A673 (cell line): ENCODE measurements at regions of chr6 and their contacts with region 1.

Region 1: DNA sequence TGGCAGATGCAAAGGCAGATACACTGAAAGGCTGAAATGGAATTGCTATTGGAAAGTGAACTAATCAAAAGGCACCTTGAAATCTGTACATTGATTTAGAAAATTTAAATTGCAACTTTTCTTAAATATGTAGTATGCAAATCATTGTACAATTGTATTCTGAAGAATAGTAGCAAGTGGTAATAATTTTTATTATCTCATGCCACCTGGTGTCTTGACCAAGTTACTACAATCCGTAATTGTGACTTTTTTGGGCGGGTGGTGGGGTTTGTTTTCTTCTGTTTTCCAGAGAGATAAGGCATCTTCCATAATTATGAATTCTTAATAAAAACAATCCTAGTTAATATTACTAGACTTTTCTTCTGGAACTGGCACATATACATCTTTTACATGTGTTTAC is 12.5 kb upstream of the BCKDHB start:
- DNase-seq: peak; percentile 41
- H3K4me3 ChIP-seq: no peak overlapping the region
- H3K27ac ChIP-seq: no peak overlapping the region
- H3K4me1 ChIP-seq: no peaks in the 10 kb centered on the region
- H3K27me3 ChIP-seq: no peaks in the 10 kb centered on the region
- CTCF ChIP-seq: peak; percentile 65

Region 2: DNA sequence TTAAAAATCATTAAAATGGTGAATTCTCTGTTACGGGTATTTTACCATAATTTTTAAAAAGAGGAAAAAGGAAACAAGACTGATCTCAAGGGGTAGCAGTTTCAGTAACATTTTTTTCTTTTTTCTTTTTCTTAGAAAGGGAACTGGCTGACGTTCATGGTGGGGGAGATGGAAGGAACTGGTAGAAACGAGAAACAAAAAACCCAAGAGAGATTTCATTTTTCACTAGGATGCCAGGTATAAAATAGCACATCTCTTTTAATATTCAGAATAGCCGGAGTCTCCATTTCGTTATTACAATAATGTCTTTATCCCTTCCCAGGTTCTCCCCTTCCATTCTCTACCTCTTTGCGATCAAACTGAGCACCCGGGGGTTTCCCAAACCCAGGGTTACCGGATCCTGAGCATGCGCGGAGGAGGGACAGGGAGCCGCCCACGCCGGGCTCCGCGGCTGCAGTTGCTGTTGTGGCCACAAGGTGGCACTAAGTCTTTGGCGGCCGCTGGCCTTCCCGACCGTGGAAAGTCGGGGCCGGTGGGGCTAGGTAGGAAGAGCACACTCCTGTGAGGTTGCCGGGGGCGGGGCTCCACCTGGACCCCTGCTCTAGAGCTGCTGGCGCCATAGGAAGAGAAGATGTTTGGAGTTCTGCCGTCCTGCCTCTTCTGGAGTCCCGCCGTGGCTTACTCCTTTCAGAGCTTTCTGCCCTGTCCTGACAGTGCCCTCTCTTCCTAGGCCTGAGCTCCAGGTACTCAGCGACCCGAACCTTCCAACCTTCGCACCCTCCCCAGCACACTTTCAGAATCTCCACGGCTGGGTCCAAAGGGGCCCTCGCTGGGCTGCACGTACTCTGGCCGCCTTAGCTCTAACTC is 316.1 kb before region 1 on chr6:
- CTCF ChIA-PET with region 1: no interaction called
- POLR2A ChIA-PET with region 1: no interaction called
- intact Hi-C with region 1: loop called (anchors 5 kb)
- DNase-seq: peak; percentile 81
- H3K4me3 ChIP-seq: peak overlapping the region; percentile 22
- H3K27ac ChIP-seq: no peak overlapping the region
- H3K4me1 ChIP-seq: no peaks in the 10 kb centered on the region
- H3K27me3 ChIP-seq: no peaks in the 10 kb centered on the region
- CTCF ChIP-seq: peak; percentile 99

Region 3: GRCh38 chr6:79878142-79878753 is 215.8 kb before region 1 on chr6:
- CTCF ChIA-PET with region 1: no interaction called
- POLR2A ChIA-PET with region 1: no interaction called
- intact Hi-C with region 1: loop called (anchors 5 kb)
- DNase-seq: no peak
- H3K4me3 ChIP-seq: no peak overlapping the region
- H3K27ac ChIP-seq: no peak overlapping the region
- H3K4me1 ChIP-seq: no peaks in the 10 kb centered on the region
- H3K27me3 ChIP-seq: no peaks in the 10 kb centered on the region
- CTCF ChIP-seq: no peak

Region 4: DNA sequence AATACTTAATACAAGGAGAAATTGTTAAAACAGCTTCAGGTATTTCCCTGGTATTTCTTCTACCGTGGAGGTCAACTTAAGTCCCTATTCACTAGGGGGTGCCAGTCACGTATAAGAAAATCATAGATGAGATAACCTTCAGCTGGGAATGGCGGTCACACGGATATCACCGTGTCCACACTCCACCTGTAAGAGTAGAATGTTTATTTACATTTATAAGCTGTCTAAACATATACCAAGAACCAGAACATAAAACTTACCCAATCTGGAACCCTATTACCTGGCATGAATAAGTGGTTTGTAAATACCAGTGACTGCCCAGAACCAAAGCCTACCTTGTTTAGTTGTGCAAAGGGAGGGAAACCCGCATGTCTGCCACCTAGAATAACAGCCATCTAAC is 144.8 kb before region 1 on chr6:
- CTCF ChIA-PET with region 1: interaction called, 6 read pairs
- POLR2A ChIA-PET with region 1: no interaction called
- intact Hi-C with region 1: loop called (anchors 2 kb)
- DNase-seq: peak; percentile 77
- H3K4me3 ChIP-seq: no peak overlapping the region
- H3K27ac ChIP-seq: no peak overlapping the region
- H3K4me1 ChIP-seq: no peaks in the 10 kb centered on the region
- H3K27me3 ChIP-seq: no peaks in the 10 kb centered on the region
- CTCF ChIP-seq: peak; percentile 82